ENCODE measurements at regions of chr17 and their contacts with region 1.

Region 1: GRCh38 chr17:41966463-41967140 is at the start of gene CNP:
- DNase-seq: peak; percentile 87 to 90 (median 89)
- H3K4me3 ChIP-seq: peak within 1 kb of the TSS; percentile 68 to 69
- H3K4me3 Mint-ChIP-seq: peak within 1 kb of the TSS; percentile 83 to 93 (median 87)
- H3K27ac ChIP-seq: peak within 1 kb of the TSS; percentile 83
- H3K27ac Mint-ChIP-seq: peak within 1 kb of the TSS; percentile 87 to 98 (median 91)
- H3K4me1 ChIP-seq: peaks cover 43% of the 10 kb centered on the region
- H3K4me1 Mint-ChIP-seq: peaks cover 20 to 42% (median 31%) of the 10 kb centered on the region in 4 donors
- H3K27me3 ChIP-seq: no peaks in the 10 kb centered on the region
- H3K27me3 Mint-ChIP-seq: no peaks in the 10 kb centered on the region
- total RNA-seq, gene CNP: 31.0 to 36.9 TPM

Region 2: DNA sequence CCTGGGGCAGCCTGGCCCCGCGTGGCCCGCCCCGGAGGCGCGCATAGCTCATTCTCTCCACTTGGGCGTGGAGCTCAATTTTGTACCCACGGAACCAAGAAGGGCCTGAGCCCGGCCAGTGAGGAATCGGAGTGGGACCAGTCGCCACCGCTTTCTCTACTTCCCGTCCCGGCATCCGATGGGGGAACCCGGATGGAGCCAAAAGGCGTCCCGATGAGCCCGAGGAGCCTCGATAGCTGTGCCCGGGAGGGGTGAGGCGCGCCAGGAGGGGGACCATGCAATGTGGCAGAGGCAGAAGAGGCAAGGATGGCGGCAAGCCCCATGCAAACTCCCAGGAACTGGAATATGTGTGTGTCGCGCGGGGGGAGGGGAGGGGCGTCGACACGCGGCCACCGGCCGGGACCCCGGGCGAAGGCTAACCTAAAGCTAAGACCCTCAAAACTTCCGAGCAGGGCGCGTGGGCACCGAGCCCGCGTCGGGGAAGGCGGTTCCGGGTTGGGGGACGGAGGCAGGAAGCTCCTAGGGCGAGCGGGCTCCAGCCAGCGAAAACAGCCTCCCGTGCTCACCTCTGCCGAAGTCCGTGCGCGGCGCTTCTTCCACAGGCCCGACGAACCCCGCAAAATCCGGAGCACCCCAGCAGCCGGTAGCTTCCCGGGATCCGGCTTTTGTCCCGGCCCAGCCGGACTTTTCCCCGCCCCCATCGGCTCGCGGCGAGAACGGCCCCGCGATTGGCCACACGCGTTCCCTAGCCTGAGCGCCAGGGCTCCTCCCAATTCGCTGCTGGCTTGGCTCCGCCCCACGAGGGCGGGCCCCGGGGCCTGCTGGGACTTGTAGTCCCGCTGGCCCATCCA is 48.1 kb before region 1 on chr17 and contains the start of gene ACLY:
- CTCF ChIA-PET with region 1: interaction called, 4 read pairs
- POLR2A ChIA-PET with region 1: interaction called, 14 read pairs
- intact Hi-C with region 1: loop called (anchors 1 kb)
- DNase-seq: peak; percentile 93 to 94 (median 93)
- H3K4me3 ChIP-seq: peak within 1 kb of the TSS; percentile 78 to 97
- H3K4me3 Mint-ChIP-seq: peak within 1 kb of the TSS; percentile 87 to 96 (median 90)
- H3K27ac ChIP-seq: peak within 1 kb of the TSS; percentile 88
- H3K27ac Mint-ChIP-seq: peak within 1 kb of the TSS; percentile 76 to 93 (median 87)
- H3K4me1 ChIP-seq: peaks cover 48% of the 10 kb centered on the region
- H3K4me1 Mint-ChIP-seq: peaks cover 23 to 46% (median 33%) of the 10 kb centered on the region in 4 donors
- H3K27me3 ChIP-seq: no peaks in the 10 kb centered on the region
- H3K27me3 Mint-ChIP-seq: no peaks in the 10 kb centered on the region
- total RNA-seq, gene ACLY: 84.4 to 88.5 TPM

Region 3: GRCh38 chr17:42027961-42028790 is 61.6 kb after region 1 on chr17:
- CTCF ChIA-PET with region 1: interaction called, 10 read pairs
- POLR2A ChIA-PET with region 1: interaction called, 4 read pairs
- intact Hi-C with region 1: no loop called
- DNase-seq: no peak
- H3K4me3 ChIP-seq: no peak overlapping the region
- H3K4me3 Mint-ChIP-seq: no peak overlapping the region
- H3K27ac ChIP-seq: no peak overlapping the region
- H3K27ac Mint-ChIP-seq: no peak overlapping the region
- H3K4me1 ChIP-seq: peaks cover 6% of the 10 kb centered on the region
- H3K4me1 Mint-ChIP-seq: peaks cover 3 to 6% (median 5%) of the 10 kb centered on the region in 4 donors
- H3K27me3 ChIP-seq: no peaks in the 10 kb centered on the region
- H3K27me3 Mint-ChIP-seq: peaks cover 2 to 3% of the 10 kb centered on the region in 2 donors

Region 4: GRCh38 chr17:42112552-42113176 is 146.1 kb after region 1 on chr17 and contains the start of gene DHX58:
- CTCF ChIA-PET with region 1: interaction called, 39 read pairs
- POLR2A ChIA-PET with region 1: interaction called, 30 read pairs
- intact Hi-C with region 1: loop called (anchors 1 kb)
- DNase-seq: peak; percentile 81 to 87 (median 84)
- H3K4me3 ChIP-seq: peak within 1 kb of the TSS; percentile 76 to 86
- H3K4me3 Mint-ChIP-seq: peak within 1 kb of the TSS; percentile 87 to 95 (median 92)
- H3K27ac ChIP-seq: peak within 1 kb of the TSS; percentile 88
- H3K27ac Mint-ChIP-seq: peak within 1 kb of the TSS; percentile 92 to 98 (median 98)
- H3K4me1 ChIP-seq: peaks cover 37% of the 10 kb centered on the region
- H3K4me1 Mint-ChIP-seq: peaks cover 24 to 64% (median 46%) of the 10 kb centered on the region in 4 donors
- H3K27me3 ChIP-seq: no peaks in the 10 kb centered on the region
- H3K27me3 Mint-ChIP-seq: no peaks in the 10 kb centered on the region
- total RNA-seq, gene DHX58: 41.8 to 43.3 TPM

Region 5: GRCh38 chr17:42153919-42154742 is 187.5 kb after region 1 on chr17:
- CTCF ChIA-PET with region 1: no interaction called
- POLR2A ChIA-PET with region 1: interaction called, 8 read pairs
- intact Hi-C with region 1: loop called (anchors 1 kb)
- DNase-seq: no peak
- H3K4me3 ChIP-seq: peak overlapping the region; percentile 86 to 96
- H3K4me3 Mint-ChIP-seq: peak overlapping the region; percentile 89 to 98 (median 94)
- H3K27ac ChIP-seq: peak overlapping the region; percentile 96
- H3K27ac Mint-ChIP-seq: peak overlapping the region; percentile 82 to 98 (median 96)
- H3K4me1 ChIP-seq: peaks cover 42% of the 10 kb centered on the region
- H3K4me1 Mint-ChIP-seq: peaks cover 24 to 49% (median 37%) of the 10 kb centered on the region in 4 donors
- H3K27me3 ChIP-seq: no peaks in the 10 kb centered on the region
- H3K27me3 Mint-ChIP-seq: no peaks in the 10 kb centered on the region